Activated CD4-positive, alpha-beta T cell treated with anti-CD3 and anti-CD28 coated beads for 36 hours (primary cell): ENCODE measurements at regions of chr12 and their contacts with region 1.

Region 1: DNA sequence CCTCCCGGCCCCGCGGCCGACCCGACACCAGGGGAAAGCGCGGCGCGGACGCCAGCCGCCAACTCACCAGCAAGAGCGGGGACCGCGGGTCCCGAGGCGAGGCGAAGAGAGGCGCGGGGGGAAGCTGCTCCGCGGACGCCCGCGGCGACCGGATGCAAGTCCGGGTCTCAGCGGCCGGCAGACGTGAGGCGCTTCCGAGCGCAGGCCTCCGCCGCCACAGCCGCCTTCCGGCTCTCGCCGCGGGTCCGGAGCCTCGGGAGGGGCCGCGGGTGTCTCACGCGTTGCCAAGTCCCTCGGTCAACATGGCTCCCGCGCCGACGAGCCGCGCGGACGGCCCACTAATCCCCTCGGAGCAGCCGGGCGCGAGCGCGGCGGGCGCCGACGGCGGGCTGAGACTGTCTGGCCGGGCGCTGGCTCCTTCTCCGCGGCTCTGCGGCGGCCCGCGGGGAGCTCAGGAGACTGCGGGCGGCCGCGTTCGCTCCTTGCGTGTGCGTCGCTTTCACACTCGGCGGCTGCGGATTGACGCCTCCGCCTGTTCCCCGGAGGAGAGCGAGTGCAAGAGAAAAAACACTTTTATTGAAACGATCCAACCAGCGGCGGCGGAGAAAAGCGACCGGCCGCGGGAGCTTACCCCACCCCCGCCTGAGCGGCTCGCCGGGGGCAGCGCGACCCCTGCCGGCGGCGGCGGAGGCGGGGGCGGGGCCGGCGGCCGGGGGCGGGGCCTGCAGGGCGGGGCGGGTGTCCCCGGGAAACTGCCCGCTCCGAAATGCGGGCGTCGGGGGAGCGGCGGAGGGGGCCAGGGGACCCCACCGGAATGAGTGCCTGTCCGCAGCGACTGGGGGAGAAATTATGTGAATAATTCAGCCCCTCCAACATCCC is at the start of gene CDK17:
- DNase-seq: peak; percentile 93
- ATAC-seq: peak; percentile 62
- H3K4me3 Mint-ChIP-seq: peak within 1 kb of the TSS; percentile 89
- H3K27ac Mint-ChIP-seq: peak within 1 kb of the TSS; percentile 98
- H3K4me1 Mint-ChIP-seq: peaks cover 35% of the 10 kb centered on the region
- H3K27me3 Mint-ChIP-seq: no peaks in the 10 kb centered on the region
- total RNA-seq, gene CDK17: 38.0 to 39.4 TPM

Region 2: GRCh38 chr12:96035278-96036236 is 364.6 kb before region 1 on chr12 and contains the start of gene LTA4H:
- CTCF ChIA-PET with region 1: interaction called, 4 read pairs
- POLR2A ChIA-PET with region 1: interaction called, 6 read pairs
- intact Hi-C with region 1: loop called (anchors 1 kb)
- DNase-seq: peak; percentile 98
- ATAC-seq: peak; percentile 95
- H3K4me3 Mint-ChIP-seq: no peak within 1 kb of the TSS
- H3K27ac Mint-ChIP-seq: no peak within 1 kb of the TSS
- H3K4me1 Mint-ChIP-seq: peaks cover 13% of the 10 kb centered on the region
- H3K27me3 Mint-ChIP-seq: no peaks in the 10 kb centered on the region
- total RNA-seq, gene LTA4H: 138 to 147 TPM

Region 3: GRCh38 chr12:96219698-96220206 is 180.4 kb before region 1 on chr12:
- CTCF ChIA-PET with region 1: interaction called, 15 read pairs
- POLR2A ChIA-PET with region 1: no interaction called
- intact Hi-C with region 1: no loop called
- DNase-seq: peak; percentile 39
- ATAC-seq: peak; percentile 28
- H3K4me3 Mint-ChIP-seq: no peak overlapping the region
- H3K27ac Mint-ChIP-seq: no peak overlapping the region
- H3K4me1 Mint-ChIP-seq: peaks cover 38% of the 10 kb centered on the region
- H3K27me3 Mint-ChIP-seq: no peaks in the 10 kb centered on the region

Region 4: DNA sequence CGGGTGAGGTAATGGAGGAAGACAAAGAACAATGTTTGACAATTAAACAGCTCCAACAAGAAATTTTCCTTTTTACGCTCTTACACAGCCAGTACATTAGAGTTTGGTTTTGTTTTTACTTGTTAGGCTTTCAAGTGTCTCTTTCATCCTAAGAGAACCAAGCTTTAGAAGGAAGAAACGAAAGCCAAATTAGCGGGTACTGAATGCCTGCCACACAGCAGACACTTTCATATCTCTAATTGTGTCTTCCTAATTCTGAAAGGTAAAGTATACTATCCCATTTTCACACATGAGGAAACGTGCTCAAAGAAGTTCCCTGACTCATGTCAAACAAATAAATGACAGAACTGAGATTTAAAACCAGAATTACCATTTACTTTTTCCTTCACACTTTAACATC is 64.9 kb before region 1 on chr12:
- CTCF ChIA-PET with region 1: interaction called, 5 read pairs
- POLR2A ChIA-PET with region 1: no interaction called
- intact Hi-C with region 1: loop called in 1 of 2 experiments (anchors 1 kb)
- DNase-seq: peak; percentile 26
- ATAC-seq: peak; percentile 92
- H3K4me3 Mint-ChIP-seq: no peak overlapping the region
- H3K27ac Mint-ChIP-seq: peak overlapping the region; percentile 43
- H3K4me1 Mint-ChIP-seq: peaks cover 40% of the 10 kb centered on the region
- H3K27me3 Mint-ChIP-seq: no peaks in the 10 kb centered on the region

Region 5: GRCh38 chr12:96416033-96416801 is 16.1 kb after region 1 on chr12:
- CTCF ChIA-PET with region 1: interaction called, 6 read pairs
- POLR2A ChIA-PET with region 1: interaction called, 3 read pairs
- intact Hi-C with region 1: loop called in 1 of 2 experiments (anchors 2 kb)
- DNase-seq: no peak
- ATAC-seq: no peak
- H3K4me3 Mint-ChIP-seq: no peak overlapping the region
- H3K27ac Mint-ChIP-seq: no peak overlapping the region
- H3K4me1 Mint-ChIP-seq: peaks cover 22% of the 10 kb centered on the region
- H3K27me3 Mint-ChIP-seq: no peaks in the 10 kb centered on the region

Region 6: DNA sequence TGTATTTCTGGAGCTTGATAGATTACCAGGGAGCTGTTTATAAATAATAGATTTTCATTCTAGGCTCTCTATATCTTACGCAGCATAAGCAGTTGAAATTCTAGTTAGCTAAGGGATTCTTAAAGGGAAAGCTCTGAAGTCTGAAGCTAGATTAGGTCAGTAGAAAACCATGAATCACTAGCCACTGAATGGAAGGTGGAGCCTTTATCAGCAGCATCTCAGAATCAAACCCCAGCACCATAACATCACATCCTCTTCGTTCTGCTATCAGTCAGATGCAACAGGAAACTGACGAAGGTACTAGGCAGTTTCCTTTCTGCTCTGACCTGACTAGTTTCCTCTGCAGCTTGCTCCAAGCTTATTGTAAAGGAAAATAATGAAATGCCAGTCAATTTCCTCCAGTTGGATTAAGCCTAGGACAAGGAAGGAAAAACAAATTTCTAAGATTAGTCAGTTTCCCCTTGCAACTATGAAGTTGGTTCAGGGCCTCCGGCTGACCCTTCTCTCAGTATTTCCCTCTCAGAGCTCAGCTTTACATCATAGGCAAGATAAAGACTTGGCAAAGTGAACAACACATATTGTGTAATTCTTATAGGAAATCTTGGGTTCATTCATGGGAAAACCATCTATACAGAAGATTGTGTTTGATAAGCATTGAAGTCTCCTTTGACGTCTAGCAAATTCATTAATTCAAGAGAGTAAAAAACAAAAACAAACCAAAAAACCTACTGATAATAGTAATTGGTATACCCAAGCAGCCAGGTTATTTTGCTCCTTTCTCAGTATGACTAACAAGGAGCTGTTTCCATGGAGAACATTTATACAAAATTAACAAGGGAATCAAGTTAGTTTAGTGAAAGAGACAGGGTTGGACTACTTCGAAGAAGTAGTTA is 45.8 kb after region 1 on chr12:
- CTCF ChIA-PET with region 1: interaction called, 39 read pairs
- POLR2A ChIA-PET with region 1: interaction called, 8 read pairs
- intact Hi-C with region 1: loop called (anchors 1 kb)
- DNase-seq: peak; percentile 64
- ATAC-seq: peak; percentile 98
- H3K4me3 Mint-ChIP-seq: peak overlapping the region; percentile 56
- H3K27ac Mint-ChIP-seq: peak overlapping the region; percentile 96
- H3K4me1 Mint-ChIP-seq: peaks cover 45% of the 10 kb centered on the region
- H3K27me3 Mint-ChIP-seq: no peaks in the 10 kb centered on the region

Region 7: DNA sequence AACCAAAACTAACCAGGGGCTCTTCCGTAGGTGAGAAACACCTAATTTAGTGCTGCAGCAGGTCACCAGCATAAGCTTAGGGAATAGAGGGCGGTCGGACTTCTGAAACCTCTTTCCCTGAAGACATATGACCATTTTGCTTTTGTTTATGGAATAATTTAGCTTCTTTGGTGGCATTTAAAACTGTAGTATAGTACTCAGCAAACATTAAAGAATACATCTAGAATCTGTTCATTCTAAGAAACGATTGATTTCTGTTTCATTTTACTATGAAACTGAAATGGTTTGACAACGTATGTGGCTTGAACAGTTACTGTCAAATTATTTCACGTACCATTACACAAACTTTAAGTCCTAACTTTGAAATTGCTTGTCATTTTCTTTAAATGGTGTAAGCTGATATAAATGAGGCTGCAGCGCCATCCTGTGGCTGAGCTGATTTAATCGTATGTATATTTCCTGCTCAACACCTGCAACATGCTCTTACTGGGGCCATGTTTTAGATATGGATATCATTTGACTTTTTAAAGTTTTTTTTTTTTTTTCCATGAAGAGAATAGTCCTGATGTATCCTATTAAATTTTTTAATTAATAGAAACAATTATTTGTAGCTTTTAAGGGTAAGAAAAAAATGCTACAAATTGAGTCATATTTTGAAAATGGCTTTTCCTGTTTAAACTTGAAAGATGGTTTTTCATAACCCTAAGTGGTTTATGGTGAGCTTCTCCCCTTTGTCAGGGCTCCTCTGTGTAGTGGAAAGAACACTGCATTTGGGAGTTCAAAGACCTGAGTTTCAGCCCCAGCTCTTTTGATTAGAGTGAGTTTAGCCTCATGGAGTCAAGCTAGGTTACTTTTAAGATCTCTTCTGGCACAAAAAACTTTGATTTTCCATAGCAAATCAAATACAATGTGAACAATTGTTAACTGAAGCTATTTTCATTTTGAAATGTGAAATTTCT is 116.6 kb after region 1 on chr12:
- CTCF ChIA-PET with region 1: interaction called, 14 read pairs
- POLR2A ChIA-PET with region 1: interaction called, 3 read pairs
- intact Hi-C with region 1: loop called (anchors 1 kb)
- DNase-seq: peak; percentile 94
- ATAC-seq: peak; percentile 83
- H3K4me3 Mint-ChIP-seq: peak overlapping the region; percentile 21
- H3K27ac Mint-ChIP-seq: peak overlapping the region; percentile 64
- H3K4me1 Mint-ChIP-seq: peaks cover 17% of the 10 kb centered on the region
- H3K27me3 Mint-ChIP-seq: no peaks in the 10 kb centered on the region

Region 8: DNA sequence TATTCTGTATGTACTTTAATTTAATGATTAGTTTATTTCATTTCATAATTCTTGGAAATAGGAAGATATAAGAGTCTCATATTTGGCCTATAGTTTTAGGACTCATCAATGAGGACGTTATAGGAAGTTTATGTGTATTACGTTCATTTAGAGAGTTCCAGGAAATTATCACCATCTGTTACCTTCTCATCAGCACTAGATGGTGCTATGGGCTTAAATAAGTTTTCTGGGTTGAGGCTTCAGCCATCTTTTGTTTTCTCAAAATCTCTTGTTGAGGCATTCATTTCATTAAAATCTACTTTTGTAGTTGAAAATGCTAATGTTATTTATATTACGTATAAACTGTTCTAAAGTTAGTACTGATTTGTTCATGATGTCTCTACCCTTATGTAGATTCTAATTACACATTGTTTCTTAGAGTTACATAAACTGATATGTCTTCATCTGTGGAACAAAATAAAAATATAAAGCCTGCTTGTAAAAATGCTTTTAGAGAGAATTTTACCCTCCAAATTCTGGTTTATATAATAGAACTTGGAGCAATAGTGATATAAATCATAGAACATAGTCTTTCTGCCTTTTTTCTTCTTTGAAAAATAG is 178.5 kb after region 1 on chr12:
- CTCF ChIA-PET with region 1: no interaction called
- POLR2A ChIA-PET with region 1: no interaction called
- intact Hi-C with region 1: no loop called
- DNase-seq: no peak
- ATAC-seq: peak; percentile 86
- H3K4me3 Mint-ChIP-seq: no peak overlapping the region
- H3K27ac Mint-ChIP-seq: no peak overlapping the region
- H3K4me1 Mint-ChIP-seq: no peaks in the 10 kb centered on the region
- H3K27me3 Mint-ChIP-seq: peaks cover 5% of the 10 kb centered on the region